ENCODE measurements at regions of chr15 and their contacts with region 1.

Region 1: DNA sequence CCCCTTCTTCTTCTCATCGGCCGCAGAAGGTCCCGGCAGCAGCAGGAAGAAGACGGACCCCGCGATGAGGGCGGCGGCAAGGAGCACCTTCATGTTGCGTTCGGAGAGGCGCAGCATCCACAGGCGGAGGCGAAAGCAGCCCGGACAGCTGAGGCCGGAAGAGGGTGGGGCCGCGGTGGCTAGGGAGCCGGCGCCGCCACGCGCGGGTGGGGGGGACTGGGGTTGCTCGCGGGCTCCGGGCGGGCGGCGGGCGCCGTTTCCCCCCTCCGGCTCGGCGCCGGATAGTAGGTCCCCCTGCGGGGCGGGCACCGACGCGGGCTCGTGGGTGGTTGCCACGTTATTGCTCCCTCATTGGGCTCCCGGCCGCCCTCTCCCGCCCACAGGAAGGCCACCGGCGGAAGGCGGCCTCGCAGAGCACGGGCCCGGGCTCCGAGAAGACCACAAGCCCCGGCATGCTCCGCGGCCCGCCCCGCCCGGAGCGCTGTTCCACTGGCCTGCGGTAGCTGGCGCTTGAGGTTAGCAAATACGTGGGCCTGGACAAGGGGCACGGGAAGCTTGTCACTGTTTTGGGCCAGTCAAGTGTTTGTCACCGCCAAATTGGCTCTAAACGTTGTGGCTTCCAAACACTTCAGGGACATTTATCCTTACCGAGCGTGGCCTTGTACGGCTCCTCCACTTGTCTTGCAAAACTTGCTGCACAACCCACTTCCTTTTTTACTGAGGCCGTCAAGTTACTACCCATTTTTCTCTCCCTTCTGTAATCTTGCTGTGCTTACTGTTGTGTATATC is at the start of gene PPIB:
- DNase-seq: peak; percentile 94 to 99 (median 98)

Region 2: GRCh38 chr15:64355944-64356709 is 193.1 kb after region 1 on chr15 and contains the start of gene CSNK1G1:
- intact Hi-C with region 1: loop called (anchors 2 kb)
- DNase-seq: peak; percentile 94 to 99 (median 97)

Region 3: GRCh38 chr15:64387562-64388168 is 224.6 kb after region 1 on chr15 and contains the start of gene TRIP4:
- intact Hi-C with region 1: loop called (anchors 10 kb)
- DNase-seq: peak; percentile 87 to 98 (median 95)

Measured in head of caudate nucleus (tissue), 42 donors.